ENCODE measurements at regions of chr19 and their contacts with region 1.

Region 1: DNA sequence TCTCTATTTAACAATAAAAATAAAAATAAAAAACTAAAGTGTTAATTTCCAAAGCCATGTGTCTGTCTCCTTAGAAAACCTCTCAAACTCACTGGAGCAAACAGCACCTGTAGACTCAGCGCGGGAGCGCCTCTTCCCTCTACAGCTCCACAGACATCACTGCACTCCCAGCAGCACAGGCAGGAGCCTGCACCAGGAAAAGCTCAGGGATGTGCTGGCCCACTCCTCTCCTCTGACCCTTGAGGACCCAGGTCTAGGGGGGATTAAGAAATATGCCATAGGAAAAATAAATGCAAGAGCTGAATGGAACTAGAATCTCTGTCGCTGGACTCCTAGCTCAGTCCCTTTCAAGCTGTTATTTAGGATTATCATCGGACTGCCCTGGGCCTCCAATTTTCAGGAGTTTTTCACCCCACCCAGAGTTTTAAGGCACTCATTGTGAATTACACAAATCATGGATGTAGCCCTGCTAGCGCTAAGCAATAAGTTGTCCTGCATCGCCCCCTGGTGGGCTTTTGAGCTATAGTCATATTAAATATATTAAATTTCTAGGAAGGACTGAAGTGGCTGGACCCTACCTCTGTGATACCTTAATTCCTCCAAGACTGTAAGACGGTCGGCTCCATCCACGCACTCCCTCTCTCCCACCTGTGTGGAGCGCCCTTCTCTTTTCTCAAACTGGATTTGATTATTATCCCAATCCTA is 333.9 kb downstream of the UQCRFS1 start:
- DNase-seq: peak; percentile 53
- H3K4me3 ChIP-seq: no peak overlapping the region
- H3K27ac ChIP-seq: no peak overlapping the region
- H3K4me1 ChIP-seq: no peaks in the 10 kb centered on the region
- H3K27me3 ChIP-seq: no peaks in the 10 kb centered on the region
- CTCF ChIP-seq: peak in 3 of 4 experiments; percentile 66 to 81 (median 70)
- POLR2A ChIP-seq: no peak

Region 2: DNA sequence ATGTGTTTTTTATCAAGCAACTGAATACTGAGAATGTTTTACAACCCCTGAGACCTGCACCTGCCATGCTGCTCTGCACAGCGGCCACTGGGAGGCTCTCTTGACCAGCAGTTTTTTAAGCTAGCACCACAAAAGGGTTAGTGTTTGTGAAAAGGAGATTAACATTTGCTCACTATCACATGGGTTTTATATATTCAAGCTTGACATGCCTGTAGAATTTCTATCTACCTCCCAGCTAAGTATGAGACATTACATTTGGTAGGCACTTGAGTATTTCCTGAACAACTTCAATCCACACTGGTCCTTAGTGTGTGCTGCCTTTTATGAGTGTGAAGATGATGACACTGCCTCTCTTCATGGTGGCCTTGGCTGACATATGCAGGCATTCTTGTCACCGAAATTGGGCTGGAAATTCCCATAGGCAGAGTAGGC is 904.9 kb before region 1 on chr19:
- intact Hi-C with region 1: loop called (anchors 10 kb)
- DNase-seq: no peak
- H3K4me3 ChIP-seq: no peak overlapping the region
- H3K27ac ChIP-seq: no peak overlapping the region
- H3K4me1 ChIP-seq: no peaks in the 10 kb centered on the region
- H3K27me3 ChIP-seq: no peaks in the 10 kb centered on the region
- CTCF ChIP-seq: peak; percentile 16 to 61 (median 54)
- POLR2A ChIP-seq: no peak

Region 3: DNA sequence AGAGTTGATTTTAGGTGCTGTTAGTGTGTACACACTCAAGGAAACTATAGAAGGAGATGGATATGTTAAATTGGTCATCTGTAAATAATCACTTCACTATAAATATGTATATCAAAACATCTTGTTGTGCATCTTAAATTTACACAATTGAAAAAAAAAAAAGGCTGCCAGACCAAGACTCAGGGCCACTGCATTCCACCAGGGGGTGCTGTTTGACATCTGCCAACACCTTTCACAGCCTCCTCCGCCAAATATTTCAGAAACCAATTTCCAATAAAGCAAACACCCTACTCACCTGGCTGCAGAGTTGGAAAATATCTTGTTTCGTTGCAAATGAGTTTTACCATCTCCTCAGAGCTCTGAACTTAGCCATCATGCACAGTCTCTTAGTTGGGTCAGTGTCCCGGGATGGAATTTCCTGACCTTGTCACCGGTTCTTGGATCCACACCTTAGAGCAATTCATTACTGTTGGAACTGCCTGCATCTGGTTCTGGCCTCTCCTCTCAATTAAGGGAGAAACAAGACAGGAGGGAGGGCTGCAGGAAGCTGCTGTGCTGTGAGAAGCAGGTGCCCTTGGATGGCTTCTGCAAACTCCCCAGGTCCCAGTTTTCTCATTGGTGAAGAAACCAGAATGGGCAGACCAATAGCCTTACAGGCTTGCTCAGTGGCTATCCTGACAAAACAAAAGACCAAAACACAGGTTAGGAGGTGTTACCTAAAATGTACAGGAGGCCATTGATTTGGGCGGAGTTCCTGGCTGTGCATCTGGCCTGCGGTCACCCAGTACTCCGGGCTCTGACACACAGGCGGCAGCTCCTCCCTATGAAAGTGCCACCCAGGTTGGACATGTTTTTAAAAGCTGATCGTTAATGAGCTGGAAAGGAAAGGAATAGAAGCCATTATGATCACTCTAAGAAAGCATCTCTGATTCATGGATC is 412.6 kb before region 1 on chr19:
- intact Hi-C with region 1: loop called (anchors 5 kb)
- DNase-seq: peak; percentile 19
- H3K4me3 ChIP-seq: no peak overlapping the region
- H3K27ac ChIP-seq: no peak overlapping the region
- H3K4me1 ChIP-seq: no peaks in the 10 kb centered on the region
- H3K27me3 ChIP-seq: no peaks in the 10 kb centered on the region
- CTCF ChIP-seq: peak; percentile 37 to 79 (median 40)
- POLR2A ChIP-seq: no peak

Region 4: DNA sequence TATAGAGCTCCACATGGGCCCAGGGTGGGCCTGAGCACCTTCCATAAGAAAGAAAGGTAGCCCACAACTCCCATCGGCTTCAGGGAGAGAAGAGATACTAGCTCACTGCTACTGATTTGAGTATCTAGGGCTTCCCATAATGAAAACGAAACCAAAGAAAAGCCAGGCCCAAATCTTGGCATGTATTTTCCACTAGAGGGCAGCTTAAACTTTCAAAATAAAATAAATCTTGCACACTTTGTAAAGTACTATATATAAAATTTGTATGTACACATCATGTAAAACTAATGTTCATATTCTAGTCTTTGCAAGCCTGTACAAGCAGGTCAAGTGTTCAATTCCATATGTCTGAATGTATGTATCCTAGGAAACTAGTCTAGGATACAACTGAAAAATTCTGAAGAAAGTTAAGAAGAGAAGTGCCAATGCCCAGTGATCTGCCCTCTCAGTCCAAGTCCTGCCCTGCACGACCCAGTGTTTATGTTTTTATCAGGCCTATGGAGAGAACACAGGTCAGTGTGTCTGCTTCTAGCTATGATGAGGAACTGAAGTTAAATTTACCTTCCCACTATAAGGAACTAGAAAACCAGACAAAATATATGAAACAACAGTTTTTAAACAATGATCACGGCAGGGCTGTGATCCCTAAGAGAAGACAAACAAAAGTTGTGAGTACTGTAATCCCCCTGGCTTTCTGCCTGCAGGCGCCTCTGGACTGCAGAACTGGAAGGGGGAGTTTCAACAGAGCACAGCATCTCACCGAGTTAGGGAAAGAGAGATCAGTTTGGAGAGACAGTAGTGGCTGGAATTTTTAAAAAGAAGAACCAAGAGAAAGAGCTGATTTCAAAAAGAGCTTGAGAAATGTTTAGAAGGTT is 141.8 kb before region 1 on chr19:
- intact Hi-C with region 1: loop called (anchors 2 kb)
- DNase-seq: no peak
- H3K4me3 ChIP-seq: no peak overlapping the region
- H3K27ac ChIP-seq: no peak overlapping the region
- H3K4me1 ChIP-seq: no peaks in the 10 kb centered on the region
- H3K27me3 ChIP-seq: no peaks in the 10 kb centered on the region
- CTCF ChIP-seq: peak in 3 of 4 experiments; percentile 43 to 67 (median 57)
- POLR2A ChIP-seq: no peak